ENCODE measurements at regions of chr2 and their contacts with region 1.

Region 1: DNA sequence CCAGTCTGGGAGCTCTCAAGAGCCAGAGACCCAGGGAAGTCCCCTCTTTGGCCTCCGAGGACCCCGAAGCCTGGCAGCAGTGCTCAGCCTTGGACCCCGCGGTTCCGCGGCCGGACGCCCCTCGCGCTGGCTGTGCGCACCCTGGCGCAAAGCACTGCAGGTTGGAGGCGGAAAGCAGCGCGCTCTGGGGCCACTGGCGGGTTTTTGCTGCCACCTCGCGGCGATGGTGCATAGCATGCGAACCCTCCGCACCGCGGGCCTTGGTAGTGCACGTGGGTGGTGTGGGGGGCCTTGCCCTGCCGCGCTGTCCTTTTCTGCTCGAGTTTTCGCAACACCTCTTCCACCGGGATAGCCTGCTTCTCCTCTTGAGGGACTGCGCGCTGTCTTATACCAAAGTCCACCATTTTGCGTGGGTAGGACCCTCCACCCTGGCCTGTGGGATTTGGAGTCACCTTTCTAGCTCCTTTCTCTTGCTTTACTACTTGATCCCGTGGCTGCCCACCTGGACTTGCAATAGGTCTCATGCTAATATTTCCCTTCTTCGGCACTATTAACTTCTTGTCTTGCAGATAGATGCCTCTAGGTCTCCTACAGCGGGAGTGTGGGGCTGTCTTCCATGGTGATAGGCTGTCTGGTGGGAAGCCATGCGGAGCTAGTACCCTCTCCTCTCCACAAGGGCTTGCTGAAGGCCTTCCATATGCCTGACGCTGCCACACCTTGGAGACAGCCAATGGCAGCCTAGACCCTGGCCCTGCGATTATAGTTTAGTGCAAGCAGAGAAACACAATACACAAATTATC is 14.3 kb downstream of the SIX3 start:
- DNase-seq: peak; percentile 58 to 91
- H3K4me3 ChIP-seq: peak overlapping the region; percentile 13; the same call in 1 of the 2 replicates
- H3K4me1 ChIP-seq: peaks cover 4% of the 10 kb centered on the region; the same call in 1 of the 2 replicates
- H3K27me3 ChIP-seq: no peaks in the 10 kb centered on the region

Region 2: DNA sequence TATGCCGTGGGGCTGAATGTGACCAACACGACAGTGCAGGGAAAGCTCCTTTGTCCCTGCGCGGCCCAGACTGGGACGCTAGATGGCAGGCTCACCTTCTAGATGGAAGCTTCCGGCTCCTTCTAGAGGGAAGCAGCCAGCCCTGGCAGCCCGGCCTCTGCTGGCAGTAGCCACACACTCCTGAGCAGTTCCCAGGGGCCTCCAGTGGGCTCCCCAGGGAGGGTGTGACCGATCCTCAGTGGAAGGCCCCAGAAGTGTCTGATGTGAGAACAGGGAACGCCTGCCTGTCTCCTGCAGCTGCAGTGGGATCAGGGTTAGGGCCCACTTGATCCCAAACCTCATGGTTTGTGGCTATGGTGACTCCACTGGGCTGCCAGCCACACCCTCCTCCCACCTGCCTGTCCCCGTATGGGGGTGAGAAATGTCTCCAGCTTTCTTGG is 911.5 kb before region 1 on chr2:
- in situ Hi-C with region 1: loop called (anchors 25 kb)
- DNase-seq: peak; percentile 80 to 93
- H3K4me3 ChIP-seq: no peak overlapping the region
- H3K4me1 ChIP-seq: peaks cover 4% of the 10 kb centered on the region
- H3K27me3 ChIP-seq: no peaks in the 10 kb centered on the region

Region 3: DNA sequence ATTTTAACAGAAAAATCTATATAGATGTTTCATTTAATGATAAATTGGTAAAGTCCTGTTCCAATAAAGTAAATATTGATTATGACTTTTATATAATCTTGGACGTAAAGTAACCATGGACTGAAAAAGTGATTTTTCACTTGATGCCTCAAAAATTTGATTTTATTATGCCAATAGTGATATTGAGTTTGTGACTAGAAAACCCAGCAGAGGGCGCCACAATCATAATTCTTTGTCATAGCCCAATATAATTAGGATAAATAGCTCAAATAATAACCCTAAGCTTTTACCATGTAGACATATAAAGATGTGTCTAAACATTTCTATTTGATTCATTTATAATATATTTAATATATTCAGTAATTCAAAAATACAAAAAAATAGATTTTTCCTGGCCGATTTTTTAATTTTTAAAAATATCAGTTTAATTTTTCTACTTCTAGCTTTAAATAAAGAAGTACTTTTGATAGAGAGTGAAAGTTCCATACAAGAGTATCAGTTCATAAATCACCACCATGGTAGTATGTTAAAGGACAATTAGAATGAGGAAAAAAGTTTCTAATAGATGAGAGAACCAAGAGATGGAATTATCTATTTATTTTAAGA is 563.4 kb before region 1 on chr2:
- in situ Hi-C with region 1: loop called (anchors 25 kb)
- DNase-seq: peak in 1 of 2 experiments; percentile 79
- H3K4me3 ChIP-seq: no peak overlapping the region
- H3K4me1 ChIP-seq: no peaks in the 10 kb centered on the region; the same call in 1 of the 2 replicates
- H3K27me3 ChIP-seq: no peaks in the 10 kb centered on the region

Region 4: GRCh38 chr2:44638649-44639048 is 317.1 kb before region 1 on chr2:
- in situ Hi-C with region 1: no loop called
- DNase-seq: peak in 1 of 2 experiments; percentile 20
- H3K4me3 ChIP-seq: no peak overlapping the region
- H3K4me1 ChIP-seq: peaks cover 6% of the 10 kb centered on the region
- H3K27me3 ChIP-seq: no peaks in the 10 kb centered on the region

Region 5: DNA sequence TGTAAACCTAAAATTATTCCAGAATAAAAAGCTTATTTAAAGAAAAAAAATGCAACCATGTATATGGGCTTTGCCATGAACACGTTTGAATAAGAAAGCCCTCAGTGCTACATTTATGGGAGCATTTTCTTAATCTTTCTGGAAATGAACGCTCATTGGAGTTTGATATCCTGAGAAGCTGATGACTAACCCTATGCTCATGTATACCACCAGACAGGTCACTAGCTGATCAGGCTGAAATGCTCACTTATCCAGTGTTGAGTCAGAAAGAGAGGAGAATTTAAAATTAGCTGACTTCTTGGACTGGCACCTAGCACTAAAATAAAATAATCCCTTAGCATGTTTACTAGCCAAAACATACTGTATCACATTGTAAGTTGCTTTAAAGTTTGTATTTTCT is 269.2 kb before region 1 on chr2:
- in situ Hi-C with region 1: no loop called
- DNase-seq: no peak
- H3K4me3 ChIP-seq: no peak overlapping the region
- H3K4me1 ChIP-seq: peaks cover 2% of the 10 kb centered on the region; the same call in 1 of the 2 replicates
- H3K27me3 ChIP-seq: no peaks in the 10 kb centered on the region

Region 6: GRCh38 chr2:44731505-44731904 is 224.3 kb before region 1 on chr2:
- in situ Hi-C with region 1: no loop called
- DNase-seq: no peak
- H3K4me3 ChIP-seq: no peak overlapping the region
- H3K4me1 ChIP-seq: no peaks in the 10 kb centered on the region
- H3K27me3 ChIP-seq: no peaks in the 10 kb centered on the region

Measured in HAP-1 (cell line).